ENCODE measurements at regions of chr4 and their contacts with region 1.

Region 1: DNA sequence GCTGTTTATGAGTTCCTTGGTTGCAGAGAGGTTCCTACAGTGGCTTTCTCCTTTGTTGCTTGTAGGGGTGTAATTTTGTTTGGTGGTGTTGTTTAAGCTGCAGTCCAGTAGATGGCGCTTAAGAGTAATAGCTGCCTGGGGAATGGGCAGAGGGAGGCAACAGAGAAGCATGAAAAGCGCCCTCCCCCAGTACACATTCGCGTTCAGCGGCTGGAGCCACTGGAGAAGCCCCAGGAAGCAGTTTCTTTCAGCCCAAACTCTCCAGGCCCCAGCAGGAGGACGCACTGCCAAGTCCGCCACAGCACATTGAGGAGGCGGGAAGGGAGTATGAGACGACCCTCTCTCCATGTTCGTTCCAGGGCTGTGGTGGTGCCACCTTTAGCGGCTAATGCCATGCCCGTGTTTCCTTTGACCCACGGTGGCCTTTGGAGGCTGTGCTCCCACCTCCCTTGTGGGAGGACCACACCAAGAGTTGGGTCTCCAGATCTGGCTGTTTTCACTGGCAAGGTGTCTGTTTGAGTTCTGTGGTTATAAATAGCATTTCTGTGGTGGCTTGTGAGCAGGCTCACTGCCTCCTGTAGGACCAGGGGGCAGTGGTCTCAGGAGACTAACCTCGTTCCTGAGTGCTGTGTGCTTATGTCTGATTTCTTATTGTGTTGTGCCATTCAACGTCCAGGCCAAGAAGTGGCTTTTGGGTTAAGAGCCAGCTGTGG is 252.3 kb downstream of the ARHGAP10 start:
- DNase-seq: peak; percentile 63
- H3K4me3 ChIP-seq: no peak overlapping the region
- H3K27ac ChIP-seq: no peak overlapping the region
- H3K4me1 ChIP-seq: no peaks in the 10 kb centered on the region
- H3K27me3 ChIP-seq: no peaks in the 10 kb centered on the region
- CTCF ChIP-seq: peak; percentile 73 to 80
- POLR2A ChIP-seq: no peak

Region 2: DNA sequence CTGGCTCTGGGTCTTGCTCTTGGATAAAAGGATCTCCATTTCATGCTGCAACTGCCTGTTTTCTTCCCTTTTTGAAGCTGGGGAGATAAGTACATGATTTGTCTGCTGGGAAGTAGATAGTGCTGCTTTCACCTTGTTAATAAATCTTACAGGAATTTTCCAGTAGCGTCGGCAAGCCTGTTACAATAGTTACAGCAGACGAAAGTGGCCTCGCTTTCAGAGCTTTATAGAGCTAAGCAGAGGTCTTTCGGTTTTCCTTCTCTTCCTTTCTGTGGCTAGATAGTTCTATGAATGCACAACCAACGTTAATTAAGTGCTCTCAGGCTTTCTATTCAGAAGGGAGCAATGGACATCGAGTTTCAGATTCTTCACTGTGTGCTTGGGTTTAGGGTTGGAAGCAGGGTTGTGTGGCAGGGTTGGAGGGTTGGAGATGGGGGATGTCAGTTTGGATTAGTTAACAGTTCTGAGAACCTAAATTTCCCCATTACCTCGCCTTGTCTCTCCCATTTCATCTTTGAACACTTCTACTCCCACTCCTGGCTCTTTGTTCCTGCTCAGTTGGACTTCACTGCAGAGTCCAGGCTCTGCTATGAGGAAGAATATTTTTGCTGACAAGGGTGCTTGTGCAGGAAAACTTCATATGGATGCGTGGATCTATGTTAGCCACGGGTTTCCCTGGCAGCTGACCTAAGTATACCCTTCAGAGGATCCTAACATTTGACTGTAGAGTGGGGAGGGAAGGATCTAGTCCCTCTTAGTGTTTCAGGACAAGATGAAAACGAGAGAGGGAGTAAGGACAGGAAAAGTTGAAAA is 14.4 kb before region 1 on chr4:
- CTCF ChIA-PET with region 1: interaction called, 16 read pairs
- POLR2A ChIA-PET with region 1: no interaction called
- dilution Hi-C with region 1: no loop called
- intact Hi-C with region 1: no loop called
- DNase-seq: peak; percentile 69
- H3K4me3 ChIP-seq: peak overlapping the region in 1 of 3 experiments; percentile 11
- H3K27ac ChIP-seq: peak overlapping the region; percentile 38
- H3K4me1 ChIP-seq: peaks cover 15% of the 10 kb centered on the region
- H3K27me3 ChIP-seq: no peaks in the 10 kb centered on the region
- CTCF ChIP-seq: no peak
- POLR2A ChIP-seq: no peak

Region 3: GRCh38 chr4:148067301-148067916 is 83.2 kb after region 1 on chr4:
- CTCF ChIA-PET with region 1: interaction called, 4 read pairs
- POLR2A ChIA-PET with region 1: no interaction called
- dilution Hi-C with region 1: no loop called
- intact Hi-C with region 1: loop called (anchors 2 kb)
- DNase-seq: peak; percentile 46
- H3K4me3 ChIP-seq: no peak overlapping the region
- H3K27ac ChIP-seq: no peak overlapping the region
- H3K4me1 ChIP-seq: no peaks in the 10 kb centered on the region
- H3K27me3 ChIP-seq: no peaks in the 10 kb centered on the region
- CTCF ChIP-seq: no peak
- POLR2A ChIP-seq: no peak

Region 4: GRCh38 chr4:148355442-148356123 is 371.4 kb after region 1 on chr4:
- CTCF ChIA-PET with region 1: no interaction called
- POLR2A ChIA-PET with region 1: no interaction called
- dilution Hi-C with region 1: no loop called
- intact Hi-C with region 1: loop called (anchors 10 kb)
- DNase-seq: peak; percentile 93
- H3K4me3 ChIP-seq: peak overlapping the region in 2 of 3 experiments; percentile 19 to 23
- H3K27ac ChIP-seq: peak overlapping the region; percentile 81
- H3K4me1 ChIP-seq: peaks cover 42% of the 10 kb centered on the region
- H3K27me3 ChIP-seq: no peaks in the 10 kb centered on the region
- CTCF ChIP-seq: no peak
- POLR2A ChIP-seq: no peak

Region 5: DNA sequence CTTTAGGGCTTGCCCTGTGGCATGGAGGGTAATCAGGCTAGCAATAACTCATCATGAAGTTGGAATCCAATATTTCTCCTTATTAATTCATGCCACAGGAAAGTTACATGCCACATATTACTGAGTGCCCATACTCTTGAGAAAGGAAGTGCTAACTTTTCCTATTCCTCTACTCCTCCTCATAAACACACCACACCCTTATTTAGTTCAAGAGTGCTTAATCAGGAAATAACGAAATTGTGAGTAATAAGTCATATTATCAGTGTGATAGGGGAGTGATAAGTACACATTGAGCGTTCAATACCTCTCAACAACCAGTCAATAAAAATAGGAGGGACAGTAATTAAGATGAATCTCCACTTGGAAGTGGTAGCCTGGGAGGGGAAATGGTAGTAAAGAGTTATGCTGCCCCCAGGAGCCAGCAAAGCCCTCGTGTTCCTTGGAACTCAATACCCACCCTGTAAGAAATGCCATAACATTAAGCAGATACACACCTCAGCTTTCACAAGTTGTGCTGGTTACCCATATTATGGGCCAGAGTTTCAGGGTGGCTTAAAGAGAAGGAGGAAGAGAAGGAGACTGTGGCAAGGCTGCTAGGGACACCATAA is 868.0 kb after region 1 on chr4:
- CTCF ChIA-PET with region 1: no interaction called
- POLR2A ChIA-PET with region 1: no interaction called
- dilution Hi-C with region 1: no loop called
- intact Hi-C with region 1: loop called (anchors 5 kb)
- DNase-seq: peak; percentile 47
- H3K4me3 ChIP-seq: no peak overlapping the region
- H3K27ac ChIP-seq: peak overlapping the region; percentile 5
- H3K4me1 ChIP-seq: peaks cover 22% of the 10 kb centered on the region
- H3K27me3 ChIP-seq: no peaks in the 10 kb centered on the region
- CTCF ChIP-seq: peak in 1 of 2 donors; percentile 14
- POLR2A ChIP-seq: no peak

Region 6: GRCh38 chr4:149264093-149264733 is 1280.0 kb after region 1 on chr4:
- CTCF ChIA-PET with region 1: interaction called, 18 read pairs
- POLR2A ChIA-PET with region 1: no interaction called
- dilution Hi-C with region 1: no loop called
- intact Hi-C with region 1: loop called (anchors 1 kb)
- DNase-seq: peak; percentile 55
- H3K4me3 ChIP-seq: no peak overlapping the region
- H3K27ac ChIP-seq: no peak overlapping the region
- H3K4me1 ChIP-seq: peaks cover 3% of the 10 kb centered on the region
- H3K27me3 ChIP-seq: no peaks in the 10 kb centered on the region
- CTCF ChIP-seq: peak; percentile 48 to 55
- POLR2A ChIP-seq: no peak